ENCODE measurements at regions of chr2 and their contacts with region 1.

Region 1: GRCh38 chr2:70871398-70872211 is 36.0 kb upstream of the CD207 start:
- DNase-seq: peak; percentile 94
- H3K4me3 ChIP-seq: peak overlapping the region in 3 of 4 donors; percentile 32 to 39 (median 32)
- H3K27ac ChIP-seq: no peak overlapping the region
- H3K4me1 ChIP-seq: peaks cover 0 to 11% (median 11%) of the 10 kb centered on the region in 4 donors
- H3K27me3 ChIP-seq: peaks cover 0 to 66% (median 6%) of the 10 kb centered on the region in 4 donors
- CTCF ChIP-seq: peak; percentile 84 to 96 (median 90)
- EP300 ChIP-seq: no peak
- POLR2A ChIP-seq: no peak

Region 2: DNA sequence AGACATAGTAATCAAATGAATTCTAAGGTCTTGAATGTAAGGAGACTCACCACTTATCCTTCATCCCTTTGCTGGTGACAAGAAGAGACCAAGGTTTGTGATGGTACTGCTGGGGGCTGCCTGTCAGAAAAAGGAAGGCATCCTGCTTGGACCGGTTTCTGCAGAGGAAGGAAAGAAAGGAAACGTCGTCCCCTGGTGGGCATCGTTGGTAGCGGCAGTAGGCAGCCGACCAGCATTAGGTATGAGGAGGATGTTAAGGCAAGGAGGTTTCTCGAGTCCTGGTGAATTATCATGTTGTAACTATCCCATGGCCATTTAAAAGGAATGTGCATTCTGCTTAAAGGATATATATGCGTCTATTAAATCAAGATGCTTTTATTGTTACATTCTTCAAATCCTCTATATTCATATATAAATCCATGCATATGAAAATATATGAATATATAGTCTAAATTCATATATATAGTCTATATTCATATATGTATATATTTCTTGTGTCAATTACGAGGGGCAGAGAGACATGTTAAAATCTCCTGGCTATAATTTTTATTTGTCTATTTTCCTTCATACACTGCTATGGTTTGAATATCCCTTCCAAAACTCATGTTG is 223.6 kb before region 1 on chr2:
- intact Hi-C with region 1: no loop called
- DNase-seq: no peak
- H3K4me3 ChIP-seq: no peak overlapping the region
- H3K27ac ChIP-seq: no peak overlapping the region
- H3K4me1 ChIP-seq: no peaks in the 10 kb centered on the region
- H3K27me3 ChIP-seq: peaks cover 0 to 48% (median 0%) of the 10 kb centered on the region in 4 donors
- CTCF ChIP-seq: peak; percentile 59 to 96 (median 80)
- EP300 ChIP-seq: no peak
- POLR2A ChIP-seq: no peak

Region 3: DNA sequence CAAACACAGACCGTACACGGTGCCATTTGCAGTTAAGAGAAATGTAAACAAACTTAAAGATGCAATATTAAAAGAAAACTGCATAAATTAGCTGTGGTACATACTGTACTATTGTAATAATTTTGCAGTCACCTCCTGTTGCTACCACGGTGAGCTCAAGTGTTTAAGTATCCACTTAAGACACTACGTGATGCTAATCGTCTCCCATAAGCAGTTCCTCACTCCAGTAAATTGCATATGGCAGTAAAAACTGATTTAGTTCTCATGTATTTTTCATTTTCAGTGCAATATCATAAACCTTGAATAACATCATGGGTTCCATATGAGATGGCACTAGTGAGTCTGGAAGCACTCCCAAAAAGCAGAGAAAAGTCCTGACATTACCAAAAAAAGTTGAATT is 65.6 kb before region 1 on chr2:
- intact Hi-C with region 1: no loop called
- DNase-seq: no peak
- H3K4me3 ChIP-seq: no peak overlapping the region
- H3K27ac ChIP-seq: no peak overlapping the region
- H3K4me1 ChIP-seq: no peaks in the 10 kb centered on the region
- H3K27me3 ChIP-seq: peaks cover 0 to 16% (median 0%) of the 10 kb centered on the region in 4 donors
- CTCF ChIP-seq: no peak
- EP300 ChIP-seq: no peak
- POLR2A ChIP-seq: no peak

Region 4: DNA sequence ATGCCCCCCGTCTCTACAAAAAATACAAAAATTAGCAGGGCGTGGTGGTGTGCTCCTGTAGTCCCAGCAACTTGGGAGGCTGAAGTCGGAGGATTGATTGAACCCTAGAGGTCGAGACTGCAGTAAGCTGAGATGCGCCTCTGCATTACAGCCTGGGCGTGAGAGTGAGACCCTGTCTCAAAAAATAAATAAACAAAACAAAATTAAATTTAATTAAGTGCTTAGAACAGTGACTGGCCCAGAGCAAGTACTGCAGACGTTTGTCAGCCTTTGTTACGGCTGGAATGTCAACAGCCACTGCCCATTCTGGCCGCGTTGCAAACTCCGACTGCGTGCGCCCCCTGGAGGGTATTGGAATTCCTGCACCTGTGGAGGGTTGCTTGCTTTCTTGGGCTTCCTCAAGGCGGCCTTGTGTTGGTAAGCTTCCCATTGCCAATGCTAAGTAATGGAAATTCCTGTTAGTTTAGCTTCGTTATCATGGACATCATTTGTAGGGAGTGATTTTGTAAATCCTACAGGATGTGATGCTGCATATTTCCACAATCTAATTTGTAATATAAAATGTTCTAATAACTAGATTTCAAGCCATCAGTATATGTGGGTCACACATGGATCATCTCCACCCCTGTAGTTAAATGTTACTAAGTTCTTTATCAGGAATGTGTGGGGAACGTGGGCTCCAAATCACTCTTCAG is 48.2 kb after region 1 on chr2:
- intact Hi-C with region 1: loop called (anchors 5 kb)
- DNase-seq: no peak
- H3K4me3 ChIP-seq: no peak overlapping the region
- H3K27ac ChIP-seq: no peak overlapping the region
- H3K4me1 ChIP-seq: peaks cover 0 to 6% (median 0%) of the 10 kb centered on the region in 4 donors
- H3K27me3 ChIP-seq: peaks cover 0 to 64% (median 4%) of the 10 kb centered on the region in 4 donors
- CTCF ChIP-seq: peak; percentile 77 to 91 (median 82)
- EP300 ChIP-seq: no peak
- POLR2A ChIP-seq: no peak

Region 5: DNA sequence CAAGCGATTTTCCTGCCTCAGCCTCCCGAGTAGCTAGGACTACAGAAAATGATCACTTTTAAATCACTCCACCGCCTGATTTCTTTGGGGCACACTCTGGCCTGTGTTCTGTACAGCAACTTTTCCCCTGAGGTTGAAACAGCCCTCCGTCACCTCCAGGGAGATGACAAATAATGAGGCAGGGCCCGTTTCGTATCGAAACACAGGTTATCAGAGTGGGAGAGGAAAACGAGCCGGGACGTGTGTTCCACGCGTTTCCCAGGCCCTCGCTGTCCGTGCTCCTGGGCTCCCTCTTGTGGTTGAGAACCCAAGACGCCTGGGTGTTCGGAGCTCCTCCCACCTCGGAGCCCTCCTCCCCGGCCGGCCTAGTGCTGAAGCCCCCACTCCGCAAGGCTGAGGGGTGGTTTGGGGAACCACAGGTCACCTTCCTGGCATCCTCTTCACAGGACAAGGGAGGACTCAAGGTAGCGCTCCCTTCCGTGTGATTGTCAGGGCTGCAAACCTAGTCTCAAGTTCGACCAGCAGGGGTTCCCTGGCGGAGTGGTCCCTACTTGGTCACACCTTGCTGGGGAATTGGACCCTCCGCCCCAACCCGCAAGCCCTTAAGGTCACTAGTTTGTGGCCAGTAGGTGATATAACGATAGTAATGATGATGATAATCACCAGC is 76.9 kb after region 1 on chr2:
- intact Hi-C with region 1: loop called (anchors 1 kb)
- DNase-seq: peak; percentile 93
- H3K4me3 ChIP-seq: peak overlapping the region; percentile 39 to 54 (median 44)
- H3K27ac ChIP-seq: no peak overlapping the region
- H3K4me1 ChIP-seq: peaks cover 8 to 24% (median 13%) of the 10 kb centered on the region in 4 donors
- H3K27me3 ChIP-seq: peaks cover 0 to 29% (median 0%) of the 10 kb centered on the region in 4 donors
- CTCF ChIP-seq: peak; percentile 69 to 85 (median 77)
- EP300 ChIP-seq: no peak
- POLR2A ChIP-seq: no peak

Measured in esophagus muscularis mucosa (tissue), 4 donors.